Breast epithelium (tissue), 4 donors: ENCODE measurements at regions of chr4 and their contacts with region 1.

Region 1: GRCh38 chr4:68375667-68376559 is 26.0 kb upstream of the YTHDC1 start:
- DNase-seq: no peak
- H3K4me3 ChIP-seq: peak overlapping the region in 2 of 3 donors; percentile 37 to 55
- H3K27ac ChIP-seq: no peak overlapping the region
- H3K4me1 ChIP-seq: no peaks in the 10 kb centered on the region
- H3K27me3 ChIP-seq: peaks cover 0 to 10% of the 10 kb centered on the region in 2 donors
- CTCF ChIP-seq: peak in 2 of 3 donors; percentile 71 to 80
- POLR2A ChIP-seq: no peak

Region 2: GRCh38 chr4:67483868-67484602 is 891.9 kb before region 1 on chr4:
- intact Hi-C with region 1: no loop called
- DNase-seq: no peak
- H3K4me3 ChIP-seq: no peak overlapping the region
- H3K27ac ChIP-seq: no peak overlapping the region
- H3K4me1 ChIP-seq: no peaks in the 10 kb centered on the region
- H3K27me3 ChIP-seq: no peaks in the 10 kb centered on the region
- CTCF ChIP-seq: no peak
- POLR2A ChIP-seq: no peak

Region 3: GRCh38 chr4:68271851-68272756 is 103.8 kb before region 1 on chr4:
- intact Hi-C with region 1: loop called (anchors 10 kb)
- DNase-seq: no peak
- H3K4me3 ChIP-seq: peak overlapping the region in 1 of 3 donors; percentile 20
- H3K27ac ChIP-seq: no peak overlapping the region
- H3K4me1 ChIP-seq: no peaks in the 10 kb centered on the region
- H3K27me3 ChIP-seq: no peaks in the 10 kb centered on the region
- CTCF ChIP-seq: peak; percentile 70 to 80 (median 77)
- POLR2A ChIP-seq: no peak

Region 4: DNA sequence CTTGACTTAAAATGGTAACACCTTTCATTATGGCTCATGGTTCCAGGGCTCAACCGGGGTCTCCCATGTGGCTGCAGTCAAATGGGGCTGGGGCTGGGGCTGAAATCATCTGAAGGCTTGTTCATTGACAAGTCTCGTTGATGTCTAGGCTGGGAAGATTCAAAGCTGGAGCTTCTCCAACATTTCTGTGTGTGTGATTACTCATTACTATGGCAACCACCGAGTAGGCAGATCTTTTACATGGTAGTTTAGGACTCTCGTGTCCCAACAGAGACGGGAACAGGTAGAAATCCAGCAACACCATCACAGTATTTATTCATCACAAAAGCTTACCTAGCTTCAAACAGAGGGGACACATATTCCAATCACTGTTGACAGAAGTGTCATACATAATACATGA is 33.8 kb before region 1 on chr4:
- intact Hi-C with region 1: no loop called
- DNase-seq: no peak
- H3K4me3 ChIP-seq: no peak overlapping the region
- H3K27ac ChIP-seq: peak overlapping the region in 1 of 2 donors; percentile 35
- H3K4me1 ChIP-seq: peaks cover 0 to 22% of the 10 kb centered on the region in 2 donors
- H3K27me3 ChIP-seq: no peaks in the 10 kb centered on the region
- CTCF ChIP-seq: no peak
- POLR2A ChIP-seq: no peak